ENCODE measurements at regions of chr12 and their contacts with region 1.

Region 1: GRCh38 chr12:93419388-93420034 is 22.2 kb downstream of the UBE2N start:
- DNase-seq: no peak
- H3K4me3 ChIP-seq: no peak overlapping the region
- H3K27ac ChIP-seq: no peak overlapping the region
- H3K4me1 ChIP-seq: no peaks in the 10 kb centered on the region
- H3K27me3 ChIP-seq: no peaks in the 10 kb centered on the region
- CTCF ChIP-seq: peak; percentile 63

Region 2: DNA sequence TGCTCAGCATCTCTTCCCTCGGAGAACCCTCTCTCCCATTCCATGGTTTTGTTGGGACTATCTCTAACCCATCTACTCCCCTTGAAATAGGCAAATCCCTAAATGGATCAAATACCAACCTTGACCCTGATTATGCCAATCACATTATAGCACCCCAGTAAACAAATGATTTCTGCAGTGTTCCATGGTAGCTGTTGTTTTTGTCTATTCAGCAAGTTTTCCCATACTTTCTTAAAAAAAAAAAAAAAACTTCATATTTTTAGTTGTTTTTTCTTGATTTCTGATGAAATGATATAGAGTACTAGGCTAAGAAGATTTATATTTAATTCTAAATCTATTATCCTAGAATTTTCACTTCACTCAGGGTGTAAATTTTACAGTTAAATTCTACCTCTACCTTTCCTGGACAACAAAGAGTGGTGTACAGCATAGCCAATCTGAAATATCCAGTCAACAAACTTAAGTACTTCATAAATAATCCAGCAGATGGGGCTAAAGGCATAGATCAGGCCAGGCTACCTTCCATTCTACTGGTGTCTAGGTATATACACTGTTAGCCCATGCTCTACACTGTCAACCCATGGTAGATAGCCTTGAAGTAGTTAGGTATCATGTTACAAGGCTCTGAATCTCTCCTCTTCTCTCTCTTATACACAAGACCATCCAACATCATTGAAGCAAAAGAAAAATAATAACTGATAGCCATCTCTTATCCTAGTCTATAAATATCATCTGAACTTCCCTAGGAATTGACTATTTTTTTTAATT is 634.5 kb before region 1 on chr12:
- intact Hi-C with region 1: loop called (anchors 10 kb)
- DNase-seq: peak; percentile 25
- H3K4me3 ChIP-seq: no peak overlapping the region
- H3K27ac ChIP-seq: no peak overlapping the region
- H3K4me1 ChIP-seq: no peaks in the 10 kb centered on the region
- H3K27me3 ChIP-seq: no peaks in the 10 kb centered on the region
- CTCF ChIP-seq: peak; percentile 48

Region 3: GRCh38 chr12:92987362-92987761 is 432.1 kb before region 1 on chr12:
- intact Hi-C with region 1: loop called (anchors 5 kb)
- DNase-seq: peak; percentile 41
- H3K4me3 ChIP-seq: no peak overlapping the region
- H3K27ac ChIP-seq: peak overlapping the region; percentile 39
- H3K4me1 ChIP-seq: peaks cover 4% of the 10 kb centered on the region
- H3K27me3 ChIP-seq: no peaks in the 10 kb centered on the region
- CTCF ChIP-seq: peak; percentile 39

Region 4: GRCh38 chr12:93378373-93379325 is 40.9 kb before region 1 on chr12:
- intact Hi-C with region 1: no loop called
- DNase-seq: peak; percentile 56
- H3K4me3 ChIP-seq: peak overlapping the region; percentile 64
- H3K27ac ChIP-seq: peak overlapping the region; percentile 82
- H3K4me1 ChIP-seq: peaks cover 3% of the 10 kb centered on the region
- H3K27me3 ChIP-seq: no peaks in the 10 kb centered on the region
- CTCF ChIP-seq: no peak

Region 5: GRCh38 chr12:93449277-93449676 is 29.8 kb after region 1 on chr12:
- intact Hi-C with region 1: no loop called
- DNase-seq: no peak
- H3K4me3 ChIP-seq: no peak overlapping the region
- H3K27ac ChIP-seq: no peak overlapping the region
- H3K4me1 ChIP-seq: no peaks in the 10 kb centered on the region
- H3K27me3 ChIP-seq: no peaks in the 10 kb centered on the region
- CTCF ChIP-seq: no peak

Region 6: DNA sequence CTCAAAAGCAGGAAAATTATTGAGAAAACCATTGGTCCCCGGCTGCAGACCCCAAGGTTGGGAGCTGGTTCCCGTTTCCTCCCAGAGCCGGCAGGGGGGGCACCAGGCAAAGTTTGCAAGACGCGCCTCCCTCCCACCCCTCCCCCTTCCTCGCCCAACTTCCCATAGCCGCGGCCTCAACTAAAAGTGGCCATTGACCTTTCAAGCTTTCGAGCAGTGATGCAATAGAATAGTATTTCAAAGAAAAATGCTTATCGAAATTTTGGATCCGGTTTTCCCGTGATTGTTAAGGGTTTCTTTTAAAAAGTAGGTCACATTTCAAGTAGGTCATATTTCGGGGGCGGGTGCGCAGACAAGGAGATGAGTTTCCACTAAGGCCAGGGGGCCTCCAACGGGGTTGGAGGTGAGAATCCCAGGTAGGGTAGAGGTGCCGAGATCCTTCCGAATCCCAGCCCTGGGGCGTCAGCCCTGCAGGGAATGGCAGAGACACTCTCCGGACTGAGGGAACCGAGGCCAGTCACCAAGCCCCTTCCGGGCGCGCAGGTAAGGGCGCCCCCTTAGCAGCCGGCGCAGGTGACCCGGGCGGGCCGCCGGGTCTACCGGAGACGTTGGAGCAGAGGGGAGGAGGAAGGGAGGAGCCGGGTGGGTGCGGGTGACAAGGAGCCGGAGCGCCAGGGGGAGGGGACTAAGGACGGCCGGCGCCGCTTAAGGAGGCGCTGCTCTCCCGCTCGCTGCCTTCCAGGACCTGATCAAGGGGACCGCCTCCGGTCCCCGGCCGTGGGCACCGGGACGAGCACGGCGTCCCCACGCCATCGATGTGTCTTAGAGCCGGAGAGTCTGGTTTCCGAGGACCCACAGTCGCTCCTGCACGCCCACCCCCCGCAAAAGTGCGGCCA is 150.4 kb after region 1 on chr12:
- intact Hi-C with region 1: no loop called
- DNase-seq: peak; percentile 93
- H3K4me3 ChIP-seq: peak overlapping the region; percentile 71
- H3K27ac ChIP-seq: peak overlapping the region; percentile 93
- H3K4me1 ChIP-seq: no peaks in the 10 kb centered on the region
- H3K27me3 ChIP-seq: no peaks in the 10 kb centered on the region
- CTCF ChIP-seq: peak; percentile 75